ENCODE measurements at regions of chr11 and their contacts with region 1.

Region 1: GRCh38 chr11:60615497-60615896 is 83.9 kb upstream of the MS4A8 start:
- DNase-seq: no peak
- H3K4me3 ChIP-seq: no peak overlapping the region
- H3K27ac ChIP-seq: no peak overlapping the region
- H3K4me1 ChIP-seq: no peaks in the 10 kb centered on the region
- H3K27me3 ChIP-seq: no peaks in the 10 kb centered on the region
- CTCF ChIP-seq: no peak

Region 2: DNA sequence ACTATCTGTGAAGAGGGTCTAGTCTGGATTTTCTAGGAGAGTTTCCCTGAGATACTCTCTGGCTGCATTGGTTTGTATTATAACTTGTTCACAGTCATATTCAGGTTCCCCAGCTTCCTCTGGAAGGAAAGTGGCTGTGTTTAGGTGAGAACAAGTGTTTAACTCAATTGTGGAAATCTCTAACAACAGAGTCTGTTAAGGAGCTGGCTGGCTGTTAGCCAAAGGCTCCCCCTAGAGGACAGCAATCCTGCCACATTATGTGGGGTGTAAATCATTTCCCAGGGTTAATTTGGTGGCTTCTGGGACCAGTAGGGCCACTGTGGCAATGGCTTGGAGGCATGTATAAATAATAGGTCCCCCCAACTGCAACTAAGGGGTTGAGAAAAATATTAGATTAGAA is 270.0 kb before region 1 on chr11:
- intact Hi-C with region 1: loop called (anchors 5 kb)
- DNase-seq: no peak
- H3K4me3 ChIP-seq: no peak overlapping the region
- H3K27ac ChIP-seq: no peak overlapping the region
- H3K4me1 ChIP-seq: no peaks in the 10 kb centered on the region
- H3K27me3 ChIP-seq: no peaks in the 10 kb centered on the region
- CTCF ChIP-seq: peak; percentile 12

Region 3: DNA sequence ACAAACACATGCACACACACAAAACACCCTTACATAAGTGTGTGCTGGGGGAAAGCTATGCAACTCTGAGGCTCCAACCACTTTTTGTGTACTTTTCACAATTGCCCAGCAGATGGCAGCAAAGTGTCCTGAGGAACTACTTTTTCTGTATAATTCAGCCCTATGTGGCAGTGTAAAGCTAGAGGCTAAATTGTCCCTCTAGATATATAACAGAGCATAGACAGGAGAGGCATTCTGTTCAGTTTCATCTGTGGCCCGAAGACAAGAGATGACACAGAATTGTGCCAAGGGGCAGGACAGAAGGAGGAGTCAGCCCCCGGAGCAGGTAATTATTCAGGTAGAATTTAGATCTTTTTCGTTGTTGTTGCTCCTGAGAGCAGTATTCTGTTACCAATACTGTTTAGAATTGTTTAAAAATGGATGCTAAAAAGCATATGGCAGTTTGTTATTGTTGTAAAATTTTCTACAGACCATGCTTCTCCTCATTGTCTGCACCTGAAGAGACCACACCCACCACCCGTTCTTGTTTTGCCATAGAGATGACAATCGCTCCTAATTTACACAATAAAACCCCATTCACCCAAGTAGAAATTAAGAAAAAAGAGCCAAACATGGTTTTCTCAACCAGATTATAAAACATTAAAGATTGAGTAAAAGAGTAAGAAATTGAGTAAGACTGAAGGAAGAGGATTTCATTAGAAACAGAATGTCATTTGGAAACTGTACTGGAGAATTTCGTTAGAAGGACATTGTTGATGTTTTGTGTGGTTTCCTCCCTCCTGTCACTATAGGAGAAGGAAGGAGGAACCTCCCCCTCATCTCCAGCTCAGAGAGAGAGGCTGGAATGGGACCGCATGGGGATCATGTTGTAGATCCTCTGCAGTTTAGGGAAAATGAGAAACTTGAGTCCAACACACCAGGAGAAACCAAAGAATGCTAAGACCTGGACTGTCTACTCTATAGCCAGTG is 251.7 kb before region 1 on chr11:
- intact Hi-C with region 1: loop called (anchors 2 kb)
- DNase-seq: peak; percentile 74
- H3K4me3 ChIP-seq: no peak overlapping the region
- H3K27ac ChIP-seq: peak overlapping the region; percentile 16
- H3K4me1 ChIP-seq: no peaks in the 10 kb centered on the region
- H3K27me3 ChIP-seq: no peaks in the 10 kb centered on the region
- CTCF ChIP-seq: peak; percentile 79

Region 4: GRCh38 chr11:60455531-60456042 is 159.9 kb before region 1 on chr11 and contains the start of gene MS4A1:
- intact Hi-C with region 1: no loop called
- DNase-seq: no peak
- H3K4me3 ChIP-seq: no peak within 1 kb of the TSS
- H3K27ac ChIP-seq: no peak within 1 kb of the TSS
- H3K4me1 ChIP-seq: no peaks in the 10 kb centered on the region
- H3K27me3 ChIP-seq: no peaks in the 10 kb centered on the region
- CTCF ChIP-seq: no peak
- total RNA-seq, gene MS4A1: 0.96 to 0.98 TPM

Region 5: DNA sequence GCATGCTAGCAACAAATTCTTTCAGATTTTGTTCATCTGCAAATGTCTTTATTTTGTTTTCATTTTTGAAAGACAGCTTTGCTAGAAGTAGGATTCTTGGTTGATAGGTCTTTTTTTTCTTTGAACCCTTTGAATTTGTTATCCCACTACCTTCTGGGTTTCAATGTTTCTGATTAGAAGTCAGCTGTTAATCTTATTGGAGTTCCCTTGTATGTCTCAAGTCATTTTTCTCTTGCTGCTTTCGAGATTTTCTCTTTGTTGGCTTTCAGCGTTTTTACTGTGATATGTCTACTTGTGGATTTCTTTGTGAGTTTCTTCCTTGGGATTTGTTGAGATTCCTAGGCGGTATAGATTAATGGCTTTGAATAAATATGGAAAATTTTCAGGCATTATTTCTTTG is 56.8 kb after region 1 on chr11:
- intact Hi-C with region 1: no loop called
- DNase-seq: no peak
- H3K4me3 ChIP-seq: no peak overlapping the region
- H3K27ac ChIP-seq: no peak overlapping the region
- H3K4me1 ChIP-seq: no peaks in the 10 kb centered on the region
- H3K27me3 ChIP-seq: no peaks in the 10 kb centered on the region
- CTCF ChIP-seq: no peak

Measured in colonic mucosa (tissue), 4 donors.